Naive thymus-derived CD4-positive, alpha-beta T cell (primary cell): ENCODE measurements at regions of chr19 and their contacts with region 1.

Region 1: GRCh38 chr19:44752816-44753618 is 4.5 kb downstream of the BCL3 start:
- DNase-seq: peak; percentile 80 to 96 (median 95)
- ATAC-seq: peak; percentile 85
- H3K4me3 ChIP-seq: peak overlapping the region; percentile 40
- H3K4me3 Mint-ChIP-seq: peak overlapping the region; percentile 91 to 96 (median 94)
- H3K27ac ChIP-seq: peak overlapping the region; percentile 97
- H3K27ac Mint-ChIP-seq: peak overlapping the region; percentile 93 to 99 (median 97)
- H3K4me1 ChIP-seq: peaks cover 46 to 60% of the 10 kb centered on the region in 2 donors
- H3K4me1 Mint-ChIP-seq: peaks cover 36 to 71% (median 63%) of the 10 kb centered on the region in 7 donors
- H3K27me3 ChIP-seq: no peaks in the 10 kb centered on the region
- H3K27me3 Mint-ChIP-seq: peaks cover 0 to 3% (median 0%) of the 10 kb centered on the region in 5 donors

Region 2: DNA sequence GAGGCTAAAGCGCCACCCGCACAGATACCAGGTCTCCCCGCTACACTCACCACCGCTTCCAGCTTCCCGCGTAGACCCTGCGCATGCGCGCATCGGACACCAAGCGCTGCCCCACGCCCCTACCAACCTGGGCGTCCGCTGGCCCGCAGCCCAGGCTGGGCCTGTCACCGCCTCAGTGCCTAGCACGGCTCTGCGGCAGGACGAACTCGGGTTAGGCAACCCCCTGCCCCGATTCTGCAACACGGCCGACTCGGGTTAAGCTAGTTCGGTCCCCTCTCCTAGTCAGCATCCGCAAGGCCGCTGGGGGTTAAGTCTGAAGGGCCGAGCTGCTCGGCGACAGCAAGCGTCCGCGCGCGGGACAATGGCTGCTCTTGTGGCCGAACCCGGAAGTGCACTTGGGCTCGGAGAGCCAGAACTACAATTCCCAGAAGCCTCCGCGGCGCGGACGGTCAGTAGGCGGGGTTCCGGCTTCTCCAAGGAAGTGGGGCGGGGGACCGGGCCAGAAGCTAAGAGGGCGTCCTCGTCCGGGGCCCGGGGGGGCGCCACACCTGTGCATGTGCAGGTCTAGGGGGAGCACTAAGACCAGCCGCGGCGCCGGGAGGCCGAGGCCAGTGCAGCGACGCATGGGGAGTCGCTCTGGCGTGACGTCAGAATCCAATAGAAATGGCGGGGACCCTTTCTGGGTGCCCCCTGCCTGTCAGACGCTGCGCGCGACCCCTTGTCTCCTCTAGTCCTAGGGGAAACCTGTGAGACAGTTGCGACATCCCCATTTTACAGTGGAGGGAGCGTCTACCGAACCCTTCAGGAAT is 252.7 kb before region 1 on chr19 and contains the start of gene ZNF180:
- CTCF ChIA-PET with region 1: no interaction called
- POLR2A ChIA-PET with region 1: no interaction called
- intact Hi-C with region 1: loop called in 1 of 2 experiments (anchors 1 kb)
- DNase-seq: peak; percentile 89 to 96 (median 93)
- ATAC-seq: peak; percentile 96
- H3K4me3 ChIP-seq: peak within 1 kb of the TSS; percentile 100
- H3K4me3 Mint-ChIP-seq: peak within 1 kb of the TSS; percentile 91 to 98 (median 96)
- H3K27ac ChIP-seq: peak within 1 kb of the TSS; percentile 84
- H3K27ac Mint-ChIP-seq: peak within 1 kb of the TSS; percentile 82 to 94 (median 92)
- H3K4me1 ChIP-seq: peaks cover 13 to 19% of the 10 kb centered on the region in 2 donors
- H3K4me1 Mint-ChIP-seq: peaks cover 29 to 45% (median 34%) of the 10 kb centered on the region in 7 donors
- H3K27me3 ChIP-seq: peaks cover 0 to 2% of the 10 kb centered on the region in 2 donors
- H3K27me3 Mint-ChIP-seq: peaks cover 7 to 18% (median 13%) of the 10 kb centered on the region in 5 donors
- total RNA-seq, gene ZNF180: 7.5 to 17.7 (median 10.6) TPM

Region 3: GRCh38 chr19:44723952-44724319 is 29.1 kb before region 1 on chr19:
- CTCF ChIA-PET with region 1: interaction called, 17 read pairs
- POLR2A ChIA-PET with region 1: interaction called, 7 read pairs
- intact Hi-C with region 1: loop called in 1 of 2 experiments (anchors 1 kb)
- DNase-seq: peak; percentile 64 to 84 (median 76)
- ATAC-seq: peak; percentile 93
- H3K4me3 ChIP-seq: no peak overlapping the region
- H3K4me3 Mint-ChIP-seq: peak overlapping the region in 1 of 10 donors; percentile 60
- H3K27ac ChIP-seq: no peak overlapping the region
- H3K27ac Mint-ChIP-seq: peak overlapping the region in 5 of 9 donors; percentile 26 to 79 (median 61)
- H3K4me1 ChIP-seq: peaks cover 0 to 10% of the 10 kb centered on the region in 2 donors
- H3K4me1 Mint-ChIP-seq: peaks cover 8 to 62% (median 24%) of the 10 kb centered on the region in 7 donors
- H3K27me3 ChIP-seq: no peaks in the 10 kb centered on the region
- H3K27me3 Mint-ChIP-seq: peaks cover 0 to 4% (median 0%) of the 10 kb centered on the region in 5 donors

Region 4: DNA sequence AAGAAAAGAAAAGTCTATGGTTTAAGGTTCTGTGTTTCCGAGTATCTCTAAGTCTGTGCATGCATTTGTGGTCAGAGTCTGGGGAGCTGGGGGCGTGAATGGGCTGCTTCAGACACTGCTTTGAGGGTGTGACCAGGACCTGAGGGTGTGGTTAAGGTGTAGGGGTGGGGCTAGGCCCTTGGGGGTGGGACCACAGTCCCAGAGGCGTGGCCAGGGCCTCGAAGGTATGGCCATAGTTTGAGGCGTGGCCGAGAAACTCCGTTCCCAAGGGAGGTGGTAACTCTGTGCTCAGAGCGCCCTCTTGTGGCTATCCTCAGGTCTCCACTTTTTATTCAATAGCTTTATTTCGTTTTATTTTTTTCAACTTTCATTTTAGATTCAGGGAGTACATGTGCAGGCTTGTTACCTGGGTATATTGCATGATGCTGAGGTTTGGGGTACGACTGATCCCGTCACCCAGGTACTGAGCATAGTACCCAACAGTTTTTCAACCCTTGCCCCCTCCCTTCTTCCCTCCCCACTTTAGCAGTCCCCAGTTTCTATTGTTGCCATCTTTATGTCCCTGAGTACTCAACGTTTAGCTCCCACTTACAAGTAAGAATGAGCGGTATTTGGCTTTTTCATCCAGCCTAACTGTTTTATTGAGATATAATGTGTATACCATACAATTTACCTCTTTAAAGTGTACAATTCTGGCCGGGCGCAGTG is 17.7 kb after region 1 on chr19:
- CTCF ChIA-PET with region 1: interaction called, 9 read pairs
- POLR2A ChIA-PET with region 1: interaction called, 12 read pairs
- intact Hi-C with region 1: loop called (anchors 1 kb)
- DNase-seq: peak; percentile 88 to 96 (median 94)
- ATAC-seq: peak; percentile 100
- H3K4me3 ChIP-seq: no peak overlapping the region
- H3K4me3 Mint-ChIP-seq: peak overlapping the region; percentile 45 to 83 (median 72)
- H3K27ac ChIP-seq: no peak overlapping the region
- H3K27ac Mint-ChIP-seq: peak overlapping the region; percentile 69 to 95 (median 86)
- H3K4me1 ChIP-seq: peaks cover 5 to 9% of the 10 kb centered on the region in 2 donors
- H3K4me1 Mint-ChIP-seq: peaks cover 0 to 37% (median 24%) of the 10 kb centered on the region in 7 donors
- H3K27me3 ChIP-seq: no peaks in the 10 kb centered on the region
- H3K27me3 Mint-ChIP-seq: peaks cover 0 to 3% (median 0%) of the 10 kb centered on the region in 5 donors

Region 5: DNA sequence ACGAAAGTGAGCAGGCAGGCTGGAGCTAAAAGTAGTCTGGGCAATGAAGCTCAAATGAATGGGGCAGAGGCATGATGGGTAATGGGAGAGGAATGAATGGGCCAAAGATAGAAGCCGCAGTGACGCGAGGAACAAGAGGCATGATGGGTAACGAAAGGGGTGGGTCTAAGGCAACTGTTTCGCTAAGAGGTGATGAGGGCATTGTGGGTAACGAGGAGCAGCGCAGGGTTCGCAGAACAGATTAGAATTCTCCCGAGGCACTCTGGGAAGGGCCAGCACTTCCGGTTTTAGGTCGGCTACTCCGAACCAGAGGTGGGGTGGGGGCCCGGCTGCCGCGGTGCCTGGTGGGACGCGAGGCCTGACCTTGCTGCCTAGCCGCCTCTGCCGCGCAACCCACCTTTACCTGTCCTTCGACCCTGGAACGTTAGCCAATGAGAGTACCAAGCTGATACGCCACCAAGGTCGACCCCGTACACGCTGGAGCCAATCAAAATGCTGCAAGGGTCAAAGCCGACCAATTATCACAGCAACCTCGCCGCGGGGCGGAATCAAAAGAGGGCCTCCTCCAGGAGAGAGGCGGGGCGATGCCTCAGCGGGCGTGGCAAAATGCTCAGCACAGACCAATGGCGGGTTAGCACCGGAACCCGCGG is 137.5 kb after region 1 on chr19:
- CTCF ChIA-PET with region 1: no interaction called
- POLR2A ChIA-PET with region 1: no interaction called
- intact Hi-C with region 1: loop called in 1 of 2 experiments (anchors 2 kb)
- DNase-seq: peak; percentile 97 to 100 (median 100)
- ATAC-seq: peak; percentile 86
- H3K4me3 ChIP-seq: peak overlapping the region; percentile 69
- H3K4me3 Mint-ChIP-seq: peak overlapping the region; percentile 83 to 93 (median 89)
- H3K27ac ChIP-seq: peak overlapping the region; percentile 84
- H3K27ac Mint-ChIP-seq: peak overlapping the region; percentile 90 to 96 (median 94)
- H3K4me1 ChIP-seq: peaks cover 10 to 20% of the 10 kb centered on the region in 2 donors
- H3K4me1 Mint-ChIP-seq: peaks cover 18 to 44% (median 35%) of the 10 kb centered on the region in 7 donors
- H3K27me3 ChIP-seq: no peaks in the 10 kb centered on the region
- H3K27me3 Mint-ChIP-seq: no peaks in the 10 kb centered on the region

Region 6: GRCh38 chr19:45200568-45200994 is 447.6 kb after region 1 on chr19:
- CTCF ChIA-PET with region 1: no interaction called
- POLR2A ChIA-PET with region 1: no interaction called
- intact Hi-C with region 1: no loop called
- DNase-seq: no peak
- ATAC-seq: no peak
- H3K4me3 ChIP-seq: no peak overlapping the region
- H3K4me3 Mint-ChIP-seq: no peak overlapping the region
- H3K27ac ChIP-seq: no peak overlapping the region
- H3K27ac Mint-ChIP-seq: no peak overlapping the region
- H3K4me1 ChIP-seq: no peaks in the 10 kb centered on the region
- H3K4me1 Mint-ChIP-seq: no peaks in the 10 kb centered on the region
- H3K27me3 ChIP-seq: no peaks in the 10 kb centered on the region
- H3K27me3 Mint-ChIP-seq: peaks cover 0 to 6% (median 0%) of the 10 kb centered on the region in 5 donors